ENCODE measurements at regions of chr11 and their contacts with region 1.

Region 1: DNA sequence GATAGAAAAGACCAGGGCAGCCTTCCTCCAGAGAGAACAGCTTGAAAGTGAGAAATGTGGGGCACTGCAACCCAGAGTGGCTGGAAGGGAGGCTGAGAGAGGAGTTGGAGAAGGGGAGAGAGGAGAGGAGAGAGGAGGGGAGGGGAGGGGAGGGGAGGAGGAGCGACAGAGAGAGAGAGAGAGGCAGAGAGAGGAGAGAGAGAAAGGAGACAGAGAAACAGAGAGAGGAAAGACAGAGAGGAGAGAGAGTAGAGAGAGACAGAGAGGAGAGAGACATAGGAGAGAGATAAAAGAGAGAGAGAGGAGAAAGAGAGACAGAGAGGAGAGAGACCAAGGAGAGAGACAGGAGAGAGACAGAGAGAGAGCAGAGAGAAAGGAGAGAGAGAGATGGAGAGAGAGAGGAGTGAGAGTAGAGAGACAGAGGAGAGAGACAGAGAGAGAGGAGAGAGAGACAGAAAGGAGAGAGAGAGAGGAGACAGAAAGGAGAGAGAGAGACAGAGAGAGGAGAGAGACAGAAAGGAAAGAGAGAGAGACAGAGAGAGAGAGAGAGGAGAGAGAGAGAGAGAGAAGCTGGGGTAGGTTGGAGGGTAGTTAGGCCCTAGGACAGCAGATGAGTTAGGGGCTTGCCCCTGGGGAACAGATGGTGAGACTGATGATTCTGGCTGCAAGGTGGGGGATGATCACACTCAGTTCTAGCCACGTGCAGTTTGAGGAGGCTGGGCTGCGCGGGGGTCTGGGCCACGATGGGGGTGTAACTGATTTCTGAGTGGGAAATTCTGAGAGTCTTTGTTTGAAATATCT is 8.5 kb upstream of the SCYL1 start:
- DNase-seq: no peak
- ATAC-seq: peak in 1 of 8 donors; percentile 16
- H3K4me3 ChIP-seq: no peak overlapping the region
- H3K27ac ChIP-seq: no peak overlapping the region
- H3K4me1 ChIP-seq: no peaks in the 10 kb centered on the region
- H3K27me3 ChIP-seq: no peaks in the 10 kb centered on the region
- CTCF ChIP-seq: no peak

Region 2: GRCh38 chr11:65060913-65061408 is 455.4 kb before region 1 on chr11:
- intact Hi-C with region 1: no loop called
- DNase-seq: no peak
- ATAC-seq: no peak
- H3K4me3 ChIP-seq: no peak overlapping the region
- H3K27ac ChIP-seq: no peak overlapping the region
- H3K4me1 ChIP-seq: no peaks in the 10 kb centered on the region
- H3K27me3 ChIP-seq: no peaks in the 10 kb centered on the region
- CTCF ChIP-seq: peak in 4 of 9 donors; percentile 4 to 24 (median 12)

Region 3: DNA sequence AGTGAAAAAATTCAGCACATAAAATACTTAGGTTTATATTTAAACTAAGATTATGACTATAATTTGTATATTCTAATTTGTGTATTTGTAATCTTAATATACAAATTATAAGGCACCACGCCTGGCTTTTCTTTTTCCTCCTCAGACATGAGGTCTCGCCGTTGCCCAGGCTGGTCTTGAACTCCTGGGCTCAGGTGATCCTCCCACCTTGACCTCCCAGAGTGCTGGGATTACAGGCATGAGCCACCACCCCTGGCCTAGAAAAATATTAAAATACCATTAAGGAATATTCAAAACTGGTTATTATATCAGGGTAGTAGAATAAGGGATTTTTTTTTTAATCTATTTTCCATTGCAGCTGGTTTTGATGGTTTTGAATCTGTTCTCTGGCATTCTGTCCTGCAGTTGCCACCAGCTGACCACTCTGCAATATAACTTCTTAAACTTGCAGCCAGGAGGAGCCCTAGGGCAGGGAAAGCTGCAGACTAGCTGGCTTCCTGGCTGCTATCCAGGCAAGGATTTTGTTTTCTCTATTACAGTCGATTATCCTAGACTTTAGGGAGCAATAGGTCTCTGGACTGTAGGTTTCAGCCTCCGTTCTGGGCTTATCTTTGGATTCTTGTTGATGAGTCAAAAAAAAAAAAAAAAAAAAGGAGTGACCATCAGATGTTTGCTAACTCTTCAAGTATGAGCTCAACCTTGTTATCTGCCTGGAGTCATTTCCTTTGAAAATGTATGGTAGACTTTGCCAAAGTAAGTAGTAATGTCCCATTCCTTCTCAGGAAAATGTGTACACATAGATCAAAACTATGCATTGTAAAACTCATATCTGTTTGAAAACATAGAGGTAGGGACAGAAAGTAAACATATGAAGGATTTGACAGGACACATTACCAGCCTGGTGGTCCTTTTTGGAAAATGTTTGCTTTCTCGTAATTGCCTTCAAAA is 241.3 kb before region 1 on chr11:
- intact Hi-C with region 1: loop called in 3 of 10 experiments (anchors 10 kb)
- DNase-seq: peak; percentile 47 to 92
- ATAC-seq: peak; percentile 85 to 93 (median 90)
- H3K4me3 ChIP-seq: peak overlapping the region in 1 of 10 donors; percentile 33
- H3K27ac ChIP-seq: peak overlapping the region in 9 of 10 donors; percentile 11 to 74 (median 52)
- H3K4me1 ChIP-seq: peaks cover 0 to 34% (median 15%) of the 10 kb centered on the region in 9 donors
- H3K27me3 ChIP-seq: no peaks in the 10 kb centered on the region
- CTCF ChIP-seq: peak; percentile 63 to 93 (median 82)

Region 4: GRCh38 chr11:65366340-65366773 is 150.0 kb before region 1 on chr11:
- intact Hi-C with region 1: loop called in 5 of 10 experiments (anchors 5 kb)
- DNase-seq: peak in 1 of 2 donors; percentile 50
- ATAC-seq: peak; percentile 53 to 73 (median 69)
- H3K4me3 ChIP-seq: no peak overlapping the region
- H3K27ac ChIP-seq: peak overlapping the region in 9 of 10 donors; percentile 13 to 68 (median 45)
- H3K4me1 ChIP-seq: peaks cover 0 to 33% (median 19%) of the 10 kb centered on the region in 9 donors
- H3K27me3 ChIP-seq: no peaks in the 10 kb centered on the region
- CTCF ChIP-seq: peak; percentile 64 to 84 (median 82)

Region 5: DNA sequence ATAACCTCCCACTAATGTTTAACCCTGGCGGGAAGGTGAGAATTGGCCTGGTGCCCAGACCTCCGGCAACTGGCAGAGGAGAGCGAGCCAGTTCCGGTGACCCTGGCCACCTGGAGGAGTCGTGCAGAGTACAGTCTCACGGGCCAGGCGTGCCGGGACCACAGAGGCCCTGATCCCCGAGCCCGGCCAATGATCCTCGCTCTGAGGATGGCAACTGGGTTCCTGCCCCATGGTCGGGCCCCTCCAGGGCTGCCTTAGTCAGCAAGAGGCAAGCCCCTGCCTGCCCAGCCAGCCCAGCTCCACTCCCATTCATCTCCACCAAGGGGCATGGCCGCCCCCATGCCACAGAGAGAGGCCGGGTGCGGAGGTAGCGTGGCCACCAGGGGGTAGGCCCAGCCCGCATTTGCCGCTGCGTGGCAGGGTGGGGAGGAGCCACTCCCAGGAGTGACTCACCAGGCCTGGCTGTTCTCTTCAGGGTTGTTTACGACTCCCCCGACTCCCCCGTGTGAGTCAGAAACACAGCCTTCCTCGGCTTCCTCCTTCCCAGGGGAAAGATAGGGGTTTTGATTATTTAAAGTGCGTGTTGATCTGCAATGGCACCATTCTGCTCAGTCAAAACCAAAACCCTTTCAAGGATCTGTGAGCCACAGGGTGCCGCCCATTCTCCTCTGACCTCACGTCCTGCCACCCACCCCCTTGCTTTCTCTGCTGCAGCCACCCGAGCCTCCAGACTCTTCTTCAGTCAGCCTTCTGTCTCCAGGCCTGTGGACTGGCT is 134.1 kb before region 1 on chr11 and contains the start of gene SLC25A45:
- intact Hi-C with region 1: loop called in 5 of 10 experiments (anchors 2 to 5 kb)
- DNase-seq: peak; percentile 90 to 93
- ATAC-seq: peak; percentile 89 to 96 (median 94)
- H3K4me3 ChIP-seq: peak within 1 kb of the TSS; percentile 27 to 74 (median 56)
- H3K27ac ChIP-seq: peak within 1 kb of the TSS; percentile 94 to 99 (median 98)
- H3K4me1 ChIP-seq: peaks cover 13 to 74% (median 47%) of the 10 kb centered on the region in 9 donors
- H3K27me3 ChIP-seq: no peaks in the 10 kb centered on the region
- CTCF ChIP-seq: peak; percentile 79 to 98 (median 86)
- total RNA-seq, gene SLC25A45: 4.6 to 12.2 (median 8.3) TPM

Region 6: GRCh38 chr11:65454696-65455456 is 61.5 kb before region 1 on chr11:
- intact Hi-C with region 1: loop called in 1 of 10 experiments (anchors 10 kb)
- DNase-seq: peak; percentile 89 to 93
- ATAC-seq: peak; percentile 91 to 98 (median 97)
- H3K4me3 ChIP-seq: peak overlapping the region; percentile 12 to 65 (median 50)
- H3K27ac ChIP-seq: peak overlapping the region; percentile 67 to 91 (median 85)
- H3K4me1 ChIP-seq: peaks cover 4 to 49% (median 24%) of the 10 kb centered on the region in 9 donors
- H3K27me3 ChIP-seq: no peaks in the 10 kb centered on the region
- CTCF ChIP-seq: peak in 3 of 9 donors; percentile 22 to 39 (median 27)

Region 7: GRCh38 chr11:65471410-65471762 is 44.9 kb before region 1 on chr11:
- intact Hi-C with region 1: loop called in 4 of 10 experiments (anchors 2 to 10 kb)
- DNase-seq: peak; percentile 81 to 85
- ATAC-seq: peak; percentile 85 to 94 (median 90)
- H3K4me3 ChIP-seq: peak overlapping the region in 9 of 10 donors; percentile 10 to 44 (median 33)
- H3K27ac ChIP-seq: peak overlapping the region; percentile 86 to 100 (median 98)
- H3K4me1 ChIP-seq: peaks cover 16 to 57% (median 41%) of the 10 kb centered on the region in 9 donors
- H3K27me3 ChIP-seq: no peaks in the 10 kb centered on the region
- CTCF ChIP-seq: peak; percentile 49 to 84 (median 72)